ENCODE measurements at regions of chr4 and their contacts with region 1.

Region 1: GRCh38 chr4:78951862-78952472 is 12.7 kb upstream of the PAQR3 start:
- DNase-seq: peak in 1 of 2 experiments; percentile 49
- H3K4me3 ChIP-seq: no peak overlapping the region
- H3K4me3 Mint-ChIP-seq: no peak overlapping the region
- H3K27ac Mint-ChIP-seq: no peak overlapping the region
- H3K4me1 ChIP-seq: no peaks in the 10 kb centered on the region
- H3K4me1 Mint-ChIP-seq: no peaks in the 10 kb centered on the region
- H3K27me3 ChIP-seq: no peaks in the 10 kb centered on the region
- H3K27me3 Mint-ChIP-seq: peaks cover 18% of the 10 kb centered on the region
- CTCF ChIP-seq: peak; percentile 53 to 55

Region 2: DNA sequence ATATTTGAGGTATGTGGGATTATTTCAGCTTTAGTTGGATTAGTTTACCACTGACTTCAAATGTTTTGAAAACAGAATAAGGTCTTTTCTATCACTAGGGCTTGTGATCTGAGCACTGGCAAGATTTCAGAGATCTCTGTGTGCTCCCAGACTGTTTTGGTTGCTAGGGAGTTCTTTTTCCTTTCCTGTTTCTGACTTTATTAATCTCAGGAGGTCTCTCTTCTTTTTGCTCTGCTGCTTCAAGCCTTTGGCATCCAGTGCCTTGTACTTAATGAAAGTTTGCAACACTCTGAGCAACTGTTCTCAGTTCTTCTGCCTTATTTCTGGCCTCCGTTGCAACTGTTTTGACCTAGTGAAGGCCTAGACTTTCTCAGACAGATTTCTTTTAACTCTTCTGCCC is 19.4 kb after region 1 on chr4:
- CTCF ChIA-PET with region 1: no interaction called
- POLR2A ChIA-PET with region 1: no interaction called
- intact Hi-C with region 1: no loop called
- DNase-seq: no peak
- H3K4me3 ChIP-seq: no peak overlapping the region
- H3K4me3 Mint-ChIP-seq: no peak overlapping the region
- H3K27ac Mint-ChIP-seq: no peak overlapping the region
- H3K4me1 ChIP-seq: no peaks in the 10 kb centered on the region
- H3K4me1 Mint-ChIP-seq: no peaks in the 10 kb centered on the region
- H3K27me3 ChIP-seq: no peaks in the 10 kb centered on the region
- H3K27me3 Mint-ChIP-seq: peaks cover 9% of the 10 kb centered on the region
- CTCF ChIP-seq: no peak

Region 3: GRCh38 chr4:79048878-79049277 is 96.9 kb after region 1 on chr4:
- CTCF ChIA-PET with region 1: no interaction called
- POLR2A ChIA-PET with region 1: no interaction called
- intact Hi-C with region 1: no loop called
- DNase-seq: no peak
- H3K4me3 ChIP-seq: no peak overlapping the region
- H3K4me3 Mint-ChIP-seq: no peak overlapping the region
- H3K27ac Mint-ChIP-seq: no peak overlapping the region
- H3K4me1 ChIP-seq: peaks cover 7% of the 10 kb centered on the region; the same call in 1 of the 2 replicates
- H3K4me1 Mint-ChIP-seq: peaks cover 7% of the 10 kb centered on the region
- H3K27me3 ChIP-seq: no peaks in the 10 kb centered on the region
- H3K27me3 Mint-ChIP-seq: peaks cover 3% of the 10 kb centered on the region
- CTCF ChIP-seq: no peak

Region 4: DNA sequence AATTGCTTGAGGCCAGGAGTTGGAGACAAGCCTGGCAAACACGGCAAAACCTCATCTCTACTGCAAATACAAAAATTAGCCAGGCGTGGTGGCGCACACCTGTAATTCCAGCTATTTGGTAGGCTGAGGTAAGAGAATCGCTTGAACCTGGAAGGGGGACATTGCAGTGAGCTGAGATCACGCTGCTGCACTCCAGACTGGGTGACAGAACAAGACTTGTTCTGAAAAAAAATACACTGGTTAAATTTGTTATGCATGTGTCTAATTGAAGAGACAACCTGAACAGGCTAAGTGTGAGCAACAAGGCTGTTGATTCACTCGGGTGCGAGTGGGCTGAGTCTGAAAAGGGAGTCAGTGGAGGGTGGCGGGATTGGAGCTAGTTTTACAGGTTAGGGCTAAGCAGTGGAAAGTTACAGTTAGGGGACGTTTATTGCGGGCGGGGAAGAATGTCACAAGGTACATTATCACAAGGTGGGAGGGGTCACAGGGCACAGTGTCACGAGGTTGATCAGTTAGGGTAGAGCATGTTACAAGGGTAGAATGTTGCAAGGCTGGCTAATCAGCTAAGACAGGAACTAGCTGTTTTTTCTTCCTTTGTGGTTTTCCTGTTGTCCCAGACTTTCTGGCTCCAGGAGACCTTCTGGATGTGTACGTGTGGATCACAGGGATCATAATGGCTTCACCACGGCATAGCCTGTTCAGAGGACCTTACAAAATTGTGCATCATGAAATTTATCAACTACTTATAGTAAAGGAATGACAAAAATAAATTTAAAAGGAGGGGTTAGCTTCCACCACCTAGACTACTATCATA is 258.1 kb after region 1 on chr4:
- CTCF ChIA-PET with region 1: no interaction called
- POLR2A ChIA-PET with region 1: no interaction called
- intact Hi-C with region 1: loop called (anchors 10 kb)
- DNase-seq: peak; percentile 42 to 56
- H3K4me3 ChIP-seq: no peak overlapping the region
- H3K4me3 Mint-ChIP-seq: peak overlapping the region; percentile 14
- H3K27ac Mint-ChIP-seq: no peak overlapping the region
- H3K4me1 ChIP-seq: no peaks in the 10 kb centered on the region
- H3K4me1 Mint-ChIP-seq: peaks cover 8% of the 10 kb centered on the region
- H3K27me3 ChIP-seq: no peaks in the 10 kb centered on the region
- H3K27me3 Mint-ChIP-seq: no peaks in the 10 kb centered on the region
- CTCF ChIP-seq: no peak

Region 5: DNA sequence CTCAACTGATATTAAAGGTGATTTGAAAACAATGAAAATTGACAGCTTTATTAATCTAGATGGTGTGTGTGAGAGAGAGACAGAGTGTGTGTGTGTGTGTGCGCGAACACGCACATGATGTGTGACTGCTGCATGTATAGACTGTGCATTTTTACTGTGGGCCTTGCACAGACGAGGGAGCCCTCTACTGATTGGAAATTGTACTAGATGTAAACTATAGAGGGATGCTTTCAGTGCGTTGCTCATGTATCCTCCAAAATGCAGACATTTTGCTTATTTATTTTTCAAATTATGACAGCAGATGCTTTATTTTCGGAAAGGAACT is 624.4 kb after region 1 on chr4:
- CTCF ChIA-PET with region 1: no interaction called
- POLR2A ChIA-PET with region 1: no interaction called
- intact Hi-C with region 1: loop called (anchors 1 kb)
- DNase-seq: peak in 1 of 2 experiments; percentile 38
- H3K4me3 ChIP-seq: no peak overlapping the region
- H3K4me3 Mint-ChIP-seq: no peak overlapping the region
- H3K27ac Mint-ChIP-seq: no peak overlapping the region
- H3K4me1 ChIP-seq: no peaks in the 10 kb centered on the region
- H3K4me1 Mint-ChIP-seq: no peaks in the 10 kb centered on the region
- H3K27me3 ChIP-seq: no peaks in the 10 kb centered on the region
- H3K27me3 Mint-ChIP-seq: no peaks in the 10 kb centered on the region
- CTCF ChIP-seq: peak; percentile 34 to 56

Region 6: DNA sequence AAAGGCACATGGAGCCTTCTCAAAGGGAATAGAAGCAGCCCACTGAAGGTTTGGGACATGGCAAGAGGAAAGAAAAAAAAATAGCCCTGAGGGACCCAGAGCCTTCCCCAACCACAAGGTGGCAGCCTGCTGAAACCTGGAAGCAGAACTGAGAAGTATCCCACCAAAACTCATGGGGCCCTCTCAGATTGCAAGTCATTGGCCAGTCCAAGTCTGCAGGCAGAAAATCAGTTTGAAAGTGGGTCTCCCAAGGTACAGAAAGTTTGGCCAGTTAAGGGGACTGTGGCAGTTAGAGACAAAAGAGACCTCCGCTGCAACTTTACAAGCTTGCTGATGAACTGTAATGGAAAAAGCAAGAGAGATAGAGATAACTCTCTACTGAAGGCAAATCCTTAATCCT is 965.3 kb after region 1 on chr4:
- CTCF ChIA-PET with region 1: no interaction called
- POLR2A ChIA-PET with region 1: no interaction called
- intact Hi-C with region 1: loop called (anchors 5 kb)
- DNase-seq: peak; percentile 50 to 56
- H3K4me3 ChIP-seq: no peak overlapping the region
- H3K4me3 Mint-ChIP-seq: no peak overlapping the region
- H3K27ac Mint-ChIP-seq: no peak overlapping the region
- H3K4me1 ChIP-seq: no peaks in the 10 kb centered on the region
- H3K4me1 Mint-ChIP-seq: no peaks in the 10 kb centered on the region
- H3K27me3 ChIP-seq: no peaks in the 10 kb centered on the region
- H3K27me3 Mint-ChIP-seq: no peaks in the 10 kb centered on the region
- CTCF ChIP-seq: peak; percentile 64 to 75

Region 7: GRCh38 chr4:80335554-80336358 is 1383.8 kb after region 1 on chr4 and contains the start of gene CFAP299:
- CTCF ChIA-PET with region 1: no interaction called
- POLR2A ChIA-PET with region 1: no interaction called
- intact Hi-C with region 1: loop called (anchors 1 kb)
- DNase-seq: peak; percentile 85 to 88
- H3K4me3 ChIP-seq: peak within 1 kb of the TSS; percentile 74
- H3K4me3 Mint-ChIP-seq: peak within 1 kb of the TSS; percentile 78
- H3K27ac Mint-ChIP-seq: no peak within 1 kb of the TSS
- H3K4me1 ChIP-seq: peaks cover 4% of the 10 kb centered on the region
- H3K4me1 Mint-ChIP-seq: no peaks in the 10 kb centered on the region
- H3K27me3 ChIP-seq: no peaks in the 10 kb centered on the region; the same call in 1 of the 2 replicates
- H3K27me3 Mint-ChIP-seq: no peaks in the 10 kb centered on the region
- CTCF ChIP-seq: peak; percentile 53 to 72
- total RNA-seq, gene CFAP299: not detected in 2 replicates

Measured in Caco-2 (cell line).